Right ventricle myocardium superior (tissue), 1 donor: ENCODE measurements at regions of chr10 and their contacts with region 1.

Region 1: GRCh38 chr10:76051007-76051936 is 619.8 kb downstream of the LRMDA start:
- DNase-seq: no peak
- ATAC-seq: no peak

Region 2: DNA sequence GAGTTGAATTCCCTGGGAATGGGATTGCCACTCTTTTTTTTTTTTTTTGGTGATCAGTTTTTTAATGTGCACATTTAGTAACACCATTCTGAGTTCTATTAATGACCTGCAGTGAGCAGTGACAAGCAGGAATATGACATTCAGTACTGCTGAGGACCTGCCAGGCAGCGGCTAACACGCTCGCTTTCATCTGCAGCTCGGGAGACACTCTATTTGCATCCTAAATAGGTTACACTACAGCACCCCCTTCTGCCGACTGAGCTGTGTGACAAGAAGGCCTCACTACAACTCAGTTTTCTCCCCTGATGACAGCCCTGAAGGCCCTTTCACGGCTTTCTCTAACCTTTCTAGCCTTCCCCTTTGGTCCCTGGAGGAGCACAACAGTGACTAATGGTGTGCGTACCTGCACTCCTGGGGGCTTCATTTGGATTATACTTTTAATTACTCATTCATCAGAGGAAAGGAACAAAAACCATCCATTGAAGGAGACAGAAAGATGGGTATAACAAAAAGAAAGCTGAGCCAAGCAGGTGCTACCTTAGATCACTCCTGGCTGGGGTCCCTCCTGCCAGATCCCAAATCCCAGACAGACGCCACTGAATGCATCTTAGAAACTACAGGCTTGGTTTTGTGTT is 252.5 kb after region 1 on chr10:
- intact Hi-C with region 1: loop called (anchors 10 kb)
- DNase-seq: peak; percentile 73
- ATAC-seq: peak; percentile 98

Region 3: GRCh38 chr10:76998451-76998850 is 947.2 kb after region 1 on chr10:
- intact Hi-C with region 1: loop called (anchors 10 kb)
- DNase-seq: no peak
- ATAC-seq: no peak